PC-9 (cell line): ENCODE measurements at regions of chrX and their contacts with region 1.

Region 1: GRCh38 chrX:123665197-123665596 is 67.7 kb downstream of the THOC2 start:
- DNase-seq: peak in 1 of 2 experiments; percentile 96
- H3K4me3 ChIP-seq: no peak overlapping the region
- H3K27ac ChIP-seq: peak overlapping the region; percentile 71
- H3K4me1 ChIP-seq: peaks cover 25% of the 10 kb centered on the region
- H3K27me3 ChIP-seq: no peaks in the 10 kb centered on the region
- CTCF ChIP-seq: no peak

Region 2: GRCh38 chrX:123348468-123348867 is 316.7 kb before region 1 on chrX:
- CTCF ChIA-PET with region 1: no interaction called
- POLR2A ChIA-PET with region 1: no interaction called
- intact Hi-C with region 1: no loop called
- DNase-seq: no peak
- H3K4me3 ChIP-seq: no peak overlapping the region
- H3K27ac ChIP-seq: no peak overlapping the region
- H3K4me1 ChIP-seq: no peaks in the 10 kb centered on the region
- H3K27me3 ChIP-seq: no peaks in the 10 kb centered on the region
- CTCF ChIP-seq: no peak

Region 3: GRCh38 chrX:123696334-123696733 is 31.1 kb after region 1 on chrX:
- CTCF ChIA-PET with region 1: interaction called, 17 read pairs
- POLR2A ChIA-PET with region 1: no interaction called
- intact Hi-C with region 1: no loop called
- DNase-seq: no peak
- H3K4me3 ChIP-seq: no peak overlapping the region
- H3K27ac ChIP-seq: no peak overlapping the region
- H3K4me1 ChIP-seq: no peaks in the 10 kb centered on the region
- H3K27me3 ChIP-seq: no peaks in the 10 kb centered on the region
- CTCF ChIP-seq: no peak